ENCODE measurements at regions of chr15 and their contacts with region 1.

Region 1: GRCh38 chr15:91271565-91272153 is 171.6 kb downstream of the SV2B start:
- DNase-seq: peak; percentile 54
- CTCF ChIP-seq: peak; percentile 84

Region 2: GRCh38 chr15:90893175-90893717 is 378.4 kb before region 1 on chr15:
- CTCF ChIA-PET with region 1: no interaction called
- POLR2A ChIA-PET with region 1: no interaction called
- DNase-seq: no peak
- CTCF ChIP-seq: peak; percentile 20

Region 3: DNA sequence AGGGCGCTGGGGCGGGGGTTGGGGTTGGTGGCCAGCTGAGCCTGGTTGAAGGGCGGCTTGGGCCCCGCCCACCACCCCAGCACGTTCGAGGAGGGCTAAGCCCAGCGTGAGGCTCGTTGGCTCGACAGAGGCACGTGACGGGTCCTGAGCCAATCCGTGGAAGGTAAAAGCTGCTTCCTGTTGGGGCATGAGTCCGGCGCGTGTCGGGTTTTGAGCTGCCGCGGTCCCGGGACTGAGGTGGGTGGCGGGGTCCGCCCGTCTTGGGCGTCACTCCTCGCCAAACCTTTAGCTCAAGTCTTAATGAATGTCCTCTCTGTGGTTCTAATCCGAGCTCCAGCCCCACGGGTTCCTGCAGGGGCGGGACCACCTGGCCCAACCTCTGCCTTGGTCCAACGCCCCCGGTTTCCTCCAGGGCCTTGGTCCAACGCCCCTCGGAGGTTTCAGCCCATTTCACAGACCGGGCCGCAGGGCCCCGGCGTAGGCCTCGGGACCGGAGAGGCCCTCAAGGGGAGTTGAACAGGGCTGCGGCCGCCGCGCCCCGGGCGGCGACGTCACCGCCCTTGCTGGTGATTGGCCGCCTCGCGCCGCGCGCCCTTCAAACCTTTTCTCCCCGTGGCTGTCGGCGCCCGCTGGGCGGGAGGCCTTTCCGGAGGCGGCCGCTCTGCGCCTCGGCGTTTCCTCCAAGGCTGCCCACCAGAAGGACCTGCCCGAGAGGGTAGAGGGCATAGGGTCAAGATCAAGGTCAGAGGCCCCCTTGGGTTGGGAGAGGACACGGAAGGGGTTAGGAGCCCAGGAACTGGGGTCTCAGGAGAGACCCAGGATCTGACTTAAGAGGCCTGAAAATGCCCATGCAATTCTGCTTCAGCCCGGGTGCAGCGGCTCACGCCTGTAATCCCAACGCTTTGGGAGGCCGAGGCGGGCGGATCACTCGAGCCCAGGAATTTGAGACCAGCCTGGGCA is 316.7 kb before region 1 on chr15 and contains the start of gene RCCD1:
- CTCF ChIA-PET with region 1: interaction called, 45 read pairs
- POLR2A ChIA-PET with region 1: no interaction called
- DNase-seq: peak; percentile 99
- CTCF ChIP-seq: no peak

Region 4: GRCh38 chr15:91040856-91041255 is 230.8 kb before region 1 on chr15:
- CTCF ChIA-PET with region 1: interaction called, 10 read pairs
- POLR2A ChIA-PET with region 1: no interaction called
- DNase-seq: no peak
- CTCF ChIP-seq: no peak

Region 5: GRCh38 chr15:91249591-91249990 is 22.1 kb before region 1 on chr15:
- CTCF ChIA-PET with region 1: interaction called, 72 read pairs
- POLR2A ChIA-PET with region 1: no interaction called
- DNase-seq: no peak
- CTCF ChIP-seq: no peak

Region 6: DNA sequence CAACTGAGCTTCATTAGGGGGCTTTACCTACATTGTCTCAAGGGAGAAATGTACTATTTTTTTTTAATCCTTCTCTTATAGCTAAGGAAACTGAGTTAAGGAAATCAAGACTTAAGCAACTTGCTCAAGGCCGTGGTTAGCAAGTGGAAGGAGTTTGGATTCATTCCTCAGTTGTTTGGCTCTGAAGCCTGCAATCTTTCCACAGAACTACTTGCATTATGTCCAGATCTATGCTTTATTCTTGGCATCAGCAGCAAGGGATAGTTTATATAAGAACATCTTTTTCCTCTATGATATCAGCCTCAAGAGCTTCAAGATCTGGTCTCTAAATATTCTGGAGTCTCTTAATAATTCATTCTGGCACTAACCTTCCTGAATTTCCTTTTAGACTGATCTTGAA is 10.8 kb after region 1 on chr15:
- CTCF ChIA-PET with region 1: interaction called, 19 read pairs
- POLR2A ChIA-PET with region 1: no interaction called
- DNase-seq: no peak
- CTCF ChIP-seq: no peak